Left ventricle myocardium superior (tissue), 1 donor: ENCODE measurements at regions of chr11 and their contacts with region 1.

Region 1: GRCh38 chr11:13955971-13956421 is 6.5 kb upstream of the SPON1 start:
- DNase-seq: peak; percentile 31
- ATAC-seq: peak; percentile 64

Region 2: DNA sequence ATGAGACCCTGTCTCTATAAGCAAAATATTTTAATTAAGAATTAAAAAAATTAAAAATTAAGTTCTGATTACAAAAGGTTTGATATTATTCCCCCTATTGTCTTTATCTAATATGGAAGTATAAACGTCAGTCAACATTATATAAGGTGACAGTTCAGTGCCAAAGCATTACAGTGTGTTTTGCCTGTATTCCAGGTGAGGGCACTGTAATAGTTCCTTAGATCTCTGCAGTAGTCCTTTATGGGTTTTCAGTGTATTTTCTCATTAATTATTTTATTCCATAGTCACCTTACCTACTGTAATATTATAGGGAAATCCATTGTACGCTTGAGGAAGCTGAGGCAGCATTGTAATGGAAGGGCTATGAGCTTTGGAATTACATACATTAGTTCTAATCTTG is 254.5 kb before region 1 on chr11:
- intact Hi-C with region 1: no loop called
- DNase-seq: no peak
- ATAC-seq: no peak

Region 3: DNA sequence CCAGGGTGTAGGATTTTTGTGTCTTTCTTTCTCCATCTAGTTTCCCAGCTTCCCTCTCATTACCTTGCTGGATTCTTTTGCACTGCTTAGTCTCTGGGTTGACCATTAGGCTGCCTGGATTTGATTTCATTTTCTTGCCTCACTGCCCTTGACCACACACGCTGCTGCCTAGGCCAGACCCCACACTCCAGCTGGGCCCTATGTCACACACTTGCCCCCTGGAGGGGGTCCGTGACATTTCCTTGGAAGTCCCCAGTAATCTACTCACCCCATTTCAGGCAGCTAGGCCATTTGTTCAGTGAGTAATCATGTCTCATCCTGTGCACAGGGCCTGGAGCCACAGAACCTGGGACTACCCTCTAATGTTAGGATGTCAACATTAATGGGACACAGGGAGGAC is 75.4 kb before region 1 on chr11:
- intact Hi-C with region 1: no loop called
- DNase-seq: no peak
- ATAC-seq: no peak

Region 4: DNA sequence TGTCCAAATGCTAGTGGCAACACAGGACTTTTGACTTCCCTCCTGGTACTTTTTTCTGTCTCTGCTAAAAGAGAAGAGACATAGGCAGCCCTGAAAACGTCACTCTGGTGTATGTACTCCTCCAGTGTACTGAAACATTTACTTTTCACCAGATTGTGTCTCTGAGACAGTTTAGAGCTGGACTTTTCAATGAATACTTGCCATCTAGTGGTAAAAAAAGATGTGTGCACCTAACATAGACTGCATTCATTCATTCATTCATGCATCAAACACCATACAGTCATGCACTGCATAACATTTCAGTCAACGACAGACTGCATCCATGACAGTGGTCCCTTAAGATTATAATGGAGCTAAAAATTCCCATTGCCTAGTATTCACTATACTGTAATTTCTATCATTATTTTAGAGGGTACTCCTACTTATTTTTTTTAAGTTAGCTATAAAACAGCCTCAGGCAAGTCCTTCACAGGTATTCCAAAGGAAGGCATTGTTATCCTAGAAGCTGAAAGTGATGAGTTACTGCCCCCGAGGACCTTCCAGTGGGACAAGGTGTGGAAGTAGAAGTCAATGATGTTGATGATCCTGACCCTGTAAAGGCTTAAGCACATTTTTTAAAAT is 192.8 kb after region 1 on chr11:
- intact Hi-C with region 1: loop called (anchors 5 kb)
- DNase-seq: no peak
- ATAC-seq: peak; percentile 68

Region 5: DNA sequence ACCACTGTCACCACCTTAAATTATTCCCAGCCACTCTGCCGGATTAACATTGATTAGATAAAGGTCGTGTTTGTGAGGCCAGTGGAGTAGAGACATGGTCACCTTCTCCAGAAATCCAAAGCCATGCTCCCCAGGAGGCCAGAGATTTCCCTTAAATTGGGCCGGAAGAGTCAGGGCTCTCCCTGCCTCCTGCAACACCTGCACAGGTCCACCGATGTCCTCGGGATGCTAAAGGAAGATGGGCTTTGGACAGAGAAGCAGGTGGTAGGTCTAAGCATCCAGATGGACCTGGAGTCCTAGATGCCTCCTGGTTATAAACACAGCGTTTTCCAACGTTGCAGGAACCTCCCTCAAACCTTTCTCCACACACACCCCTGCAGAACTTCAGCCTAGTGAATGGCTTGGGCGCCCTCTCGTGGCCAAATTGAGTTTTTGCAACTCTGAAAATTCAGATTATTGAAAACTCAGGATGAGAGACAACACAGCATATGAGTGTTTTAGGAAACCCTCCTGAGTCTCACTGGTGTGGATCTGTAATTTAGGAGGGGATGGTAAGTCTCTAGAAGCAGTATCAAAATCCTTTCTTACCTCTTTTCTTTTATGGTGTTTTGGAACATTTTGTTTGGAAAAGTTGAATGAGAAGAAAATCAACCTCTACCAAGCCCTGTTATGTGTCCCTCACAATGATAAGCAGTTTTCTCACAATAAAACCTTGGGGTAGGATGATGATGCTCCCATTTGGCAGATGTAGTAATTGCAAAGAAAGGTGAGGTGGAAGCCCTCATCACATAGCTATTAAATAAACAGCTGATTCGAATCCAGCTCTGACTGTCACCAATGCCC is 293.3 kb after region 1 on chr11:
- intact Hi-C with region 1: loop called (anchors 2 kb)
- DNase-seq: peak; percentile 60
- ATAC-seq: peak; percentile 73

Region 6: DNA sequence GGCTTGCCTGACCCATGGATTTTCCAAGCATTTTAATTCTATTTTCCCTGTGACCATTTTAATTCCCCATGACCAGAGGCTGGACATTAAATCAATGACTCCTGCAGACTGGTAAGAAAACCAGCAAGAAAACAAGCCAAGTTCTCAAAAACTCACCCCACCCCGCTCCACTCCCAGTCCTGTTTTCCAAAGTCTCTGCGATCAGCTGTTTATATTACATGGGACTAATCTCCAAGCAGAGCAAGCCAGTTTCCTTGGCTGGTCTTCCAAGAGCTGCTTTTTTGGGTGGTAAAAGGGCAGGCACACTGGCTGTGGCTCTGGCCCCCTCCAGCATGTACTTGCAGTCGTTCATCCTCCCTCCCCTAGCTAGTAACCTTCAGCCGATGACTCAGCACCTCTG is 305.1 kb after region 1 on chr11:
- intact Hi-C with region 1: no loop called
- DNase-seq: no peak
- ATAC-seq: peak; percentile 55